Activated T-helper 2 cell treated with anti-CD3 and anti-CD28 coated beads, Interferon-gamma antibody, Interleukin-2, Interleukin-4, amounts not matched to agents 10 μg/mL and 5 μg/mL and 100 μg/mL, durations not matched to agents 14 hours and 24 hours and 36 hours (primary cell): ENCODE measurements at regions of chr6 and their contacts with region 1.

Region 1: DNA sequence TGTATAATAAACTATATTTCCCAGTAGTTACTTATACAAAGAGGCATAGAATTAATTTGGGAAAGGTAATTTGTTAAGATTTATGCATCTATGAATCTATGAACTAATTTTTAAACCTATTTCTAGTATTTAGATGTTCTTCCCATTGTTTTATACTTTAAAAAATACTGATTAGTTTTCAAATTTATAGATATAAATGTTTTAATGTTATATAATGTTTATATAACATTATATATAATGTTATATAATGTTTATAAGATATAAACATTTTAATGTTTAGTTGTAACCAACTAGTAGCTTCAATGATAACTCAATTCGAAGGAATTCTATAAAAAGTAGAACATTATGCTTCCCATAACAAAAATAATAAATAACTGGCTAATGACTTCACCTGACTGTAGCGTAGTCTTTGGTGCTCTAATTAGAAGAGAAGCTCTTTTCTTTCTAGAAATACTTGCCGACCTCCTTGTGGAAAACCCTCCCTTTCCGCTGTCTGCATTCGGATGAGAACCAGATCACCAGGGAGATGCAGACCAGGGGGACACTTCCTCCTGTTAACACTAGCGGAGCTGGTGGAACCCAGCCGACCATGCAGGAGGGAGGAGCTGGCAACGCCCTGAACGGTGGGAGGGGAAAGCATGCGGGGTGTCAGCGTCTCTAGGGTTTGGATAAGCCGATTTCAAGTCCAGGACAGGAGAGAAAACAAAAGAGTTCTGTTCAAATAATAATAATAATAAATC is 158.4 kb downstream of the OR2B2 start:
- DNase-seq: peak; percentile 70
- H3K4me3 Mint-ChIP-seq: peak overlapping the region; percentile 95
- H3K27ac Mint-ChIP-seq: peak overlapping the region; percentile 84
- H3K4me1 Mint-ChIP-seq: peaks cover 46% of the 10 kb centered on the region
- H3K27me3 Mint-ChIP-seq: no peaks in the 10 kb centered on the region

Region 2: GRCh38 chr6:26285143-26286134 is 1468.4 kb before region 1 on chr6:
- intact Hi-C with region 1: loop called (anchors 5 kb)
- DNase-seq: peak; percentile 95
- H3K4me3 Mint-ChIP-seq: peak overlapping the region; percentile 88
- H3K27ac Mint-ChIP-seq: peak overlapping the region; percentile 95
- H3K4me1 Mint-ChIP-seq: peaks cover 33% of the 10 kb centered on the region
- H3K27me3 Mint-ChIP-seq: peaks cover 2% of the 10 kb centered on the region

Region 3: GRCh38 chr6:27177485-27178406 is 576.1 kb before region 1 on chr6:
- intact Hi-C with region 1: loop called (anchors 2 kb)
- DNase-seq: peak; percentile 65
- H3K4me3 Mint-ChIP-seq: peak overlapping the region; percentile 90
- H3K27ac Mint-ChIP-seq: peak overlapping the region; percentile 87
- H3K4me1 Mint-ChIP-seq: peaks cover 11% of the 10 kb centered on the region
- H3K27me3 Mint-ChIP-seq: peaks cover 37% of the 10 kb centered on the region

Region 4: DNA sequence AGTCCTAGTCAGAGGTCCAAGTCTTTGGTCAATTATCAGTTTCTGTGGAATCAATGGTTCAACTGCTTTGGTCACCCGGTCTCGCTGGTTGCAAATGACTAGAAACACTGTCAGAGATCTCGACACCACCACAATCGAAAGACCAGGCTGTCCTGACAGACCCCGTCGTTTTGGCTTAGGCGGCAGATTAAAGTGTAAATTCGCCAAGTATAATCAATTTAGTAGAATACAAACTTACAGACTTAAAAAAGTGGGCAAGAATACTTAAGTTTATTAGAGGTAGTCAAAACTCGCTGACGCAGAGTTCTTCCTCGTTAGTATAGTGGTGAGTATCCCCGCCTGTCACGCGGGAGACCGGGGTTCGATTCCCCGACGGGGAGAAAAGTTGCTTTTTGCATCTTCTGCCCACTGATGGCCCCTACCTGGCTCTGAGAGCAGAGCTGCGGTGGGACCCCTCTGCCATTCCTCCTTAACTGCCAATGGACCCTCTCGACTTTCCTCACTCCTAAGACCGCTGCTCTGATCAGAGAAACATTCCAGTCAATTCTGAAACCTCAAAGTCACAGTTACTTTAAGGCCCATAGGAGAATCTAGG is 250.3 kb before region 1 on chr6:
- intact Hi-C with region 1: loop called (anchors 5 kb)
- DNase-seq: peak; percentile 63
- H3K4me3 Mint-ChIP-seq: peak overlapping the region; percentile 88
- H3K27ac Mint-ChIP-seq: peak overlapping the region; percentile 23
- H3K4me1 Mint-ChIP-seq: peaks cover 23% of the 10 kb centered on the region
- H3K27me3 Mint-ChIP-seq: peaks cover 32% of the 10 kb centered on the region

Region 5: GRCh38 chr6:27672113-27672799 is 81.6 kb before region 1 on chr6:
- intact Hi-C with region 1: loop called (anchors 5 kb)
- DNase-seq: peak; percentile 52
- H3K4me3 Mint-ChIP-seq: peak overlapping the region; percentile 62
- H3K27ac Mint-ChIP-seq: no peak overlapping the region
- H3K4me1 Mint-ChIP-seq: peaks cover 43% of the 10 kb centered on the region
- H3K27me3 Mint-ChIP-seq: peaks cover 57% of the 10 kb centered on the region

Region 6: DNA sequence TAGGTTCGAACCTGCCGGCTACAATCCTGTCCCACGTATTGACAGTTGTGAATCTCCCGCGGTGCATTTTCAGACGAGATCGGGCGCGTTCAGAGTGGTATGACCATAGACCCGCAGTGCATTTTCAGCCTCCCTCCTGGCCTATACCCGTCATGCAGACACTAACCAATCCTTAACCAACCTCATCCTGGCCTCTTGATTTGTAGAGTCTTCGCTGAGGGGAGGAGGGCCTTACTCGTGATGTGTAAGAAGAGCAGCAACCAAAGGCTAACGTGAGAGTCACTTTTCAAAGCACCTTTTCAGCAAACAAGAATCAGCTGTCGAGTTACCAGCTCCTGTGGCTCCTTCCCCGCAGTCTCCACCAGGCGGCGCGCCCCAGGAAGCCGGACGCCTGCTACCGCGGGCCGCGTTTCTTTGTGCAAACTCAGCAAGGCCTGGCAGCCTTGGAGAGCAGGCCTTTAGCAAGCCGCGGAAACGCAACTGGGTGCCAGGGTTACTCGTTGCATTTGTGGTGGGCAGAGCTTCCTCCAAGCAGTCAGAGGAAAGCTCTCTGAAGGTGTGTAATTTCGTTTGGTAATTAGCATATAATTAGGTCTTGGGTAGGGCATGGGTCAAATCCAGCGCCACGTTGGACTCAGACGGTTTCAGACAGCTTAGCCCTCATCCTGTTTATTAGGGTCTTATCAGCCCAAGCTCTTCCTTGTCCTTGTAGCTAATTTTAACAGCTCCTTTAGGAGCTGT is 18.6 kb after region 1 on chr6:
- intact Hi-C with region 1: loop called (anchors 2 kb)
- DNase-seq: peak; percentile 82
- H3K4me3 Mint-ChIP-seq: no peak overlapping the region
- H3K27ac Mint-ChIP-seq: peak overlapping the region; percentile 43
- H3K4me1 Mint-ChIP-seq: peaks cover 12% of the 10 kb centered on the region
- H3K27me3 Mint-ChIP-seq: peaks cover 20% of the 10 kb centered on the region

Region 7: DNA sequence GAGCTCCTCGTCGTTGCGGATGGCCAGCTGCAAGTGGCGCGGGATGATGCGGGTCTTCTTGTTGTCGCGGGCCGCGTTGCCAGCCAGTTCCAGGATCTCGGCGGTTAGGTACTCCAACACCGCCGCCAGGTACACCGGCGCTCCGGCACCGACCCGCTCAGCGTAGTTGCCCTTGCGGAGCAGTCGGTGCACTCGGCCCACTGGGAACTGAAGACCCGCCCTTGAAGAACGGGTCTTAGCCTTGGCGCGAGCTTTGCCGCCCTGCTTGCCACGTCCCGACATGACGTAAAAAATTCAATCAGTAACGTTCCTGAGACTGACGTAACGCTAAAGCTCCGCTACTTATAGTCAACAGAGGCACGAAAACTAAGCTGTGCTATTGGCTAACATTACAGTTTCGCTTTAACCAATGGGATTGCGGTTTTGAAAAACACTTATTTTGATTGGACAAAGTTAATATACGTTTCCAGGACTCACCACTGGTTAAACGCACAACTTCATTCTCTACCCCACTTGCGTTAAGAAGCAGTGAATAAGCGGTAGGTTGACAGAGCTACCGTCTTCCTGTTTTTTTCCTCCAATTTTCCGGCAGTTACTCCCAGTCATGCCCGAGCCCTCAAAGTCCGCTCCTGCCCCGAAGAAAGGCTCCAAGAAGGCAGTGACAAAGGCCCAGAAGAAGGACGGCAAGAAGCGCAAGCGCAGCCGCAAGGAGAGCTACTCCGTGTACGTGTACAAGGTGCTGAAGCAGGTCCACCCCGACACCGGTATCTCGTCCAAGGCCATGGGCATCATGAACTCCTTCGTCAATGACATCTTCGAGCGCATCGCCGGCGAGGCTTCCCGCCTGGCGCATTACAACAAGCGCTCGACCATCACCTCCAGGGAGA is 84.5 kb after region 1 on chr6:
- intact Hi-C with region 1: no loop called
- DNase-seq: peak; percentile 85
- H3K4me3 Mint-ChIP-seq: no peak overlapping the region
- H3K27ac Mint-ChIP-seq: no peak overlapping the region
- H3K4me1 Mint-ChIP-seq: peaks cover 28% of the 10 kb centered on the region
- H3K27me3 Mint-ChIP-seq: no peaks in the 10 kb centered on the region

Region 8: GRCh38 chr6:27902335-27903314 is 148.8 kb after region 1 on chr6:
- intact Hi-C with region 1: loop called (anchors 1 kb)
- DNase-seq: peak; percentile 78
- H3K4me3 Mint-ChIP-seq: peak overlapping the region; percentile 82
- H3K27ac Mint-ChIP-seq: peak overlapping the region; percentile 90
- H3K4me1 Mint-ChIP-seq: peaks cover 22% of the 10 kb centered on the region
- H3K27me3 Mint-ChIP-seq: peaks cover 13% of the 10 kb centered on the region